ENCODE measurements at regions of chr2 and their contacts with region 1.

Region 1: GRCh38 chr2:112941753-112942658 is 31.0 kb downstream of the IL37 start:
- DNase-seq: peak; percentile 50
- H3K4me3 ChIP-seq: no peak overlapping the region
- H3K27ac ChIP-seq: no peak overlapping the region
- H3K27me3 ChIP-seq: peaks cover 10% of the 10 kb centered on the region
- CTCF ChIP-seq: peak; percentile 98

Region 2: GRCh38 chr2:112726497-112727190 is 215.4 kb before region 1 on chr2:
- CTCF ChIA-PET with region 1: interaction called, 57 read pairs
- POLR2A ChIA-PET with region 1: no interaction called
- DNase-seq: peak; percentile 81
- H3K4me3 ChIP-seq: no peak overlapping the region
- H3K27ac ChIP-seq: no peak overlapping the region
- H3K27me3 ChIP-seq: no peaks in the 10 kb centered on the region
- CTCF ChIP-seq: peak; percentile 97

Region 3: DNA sequence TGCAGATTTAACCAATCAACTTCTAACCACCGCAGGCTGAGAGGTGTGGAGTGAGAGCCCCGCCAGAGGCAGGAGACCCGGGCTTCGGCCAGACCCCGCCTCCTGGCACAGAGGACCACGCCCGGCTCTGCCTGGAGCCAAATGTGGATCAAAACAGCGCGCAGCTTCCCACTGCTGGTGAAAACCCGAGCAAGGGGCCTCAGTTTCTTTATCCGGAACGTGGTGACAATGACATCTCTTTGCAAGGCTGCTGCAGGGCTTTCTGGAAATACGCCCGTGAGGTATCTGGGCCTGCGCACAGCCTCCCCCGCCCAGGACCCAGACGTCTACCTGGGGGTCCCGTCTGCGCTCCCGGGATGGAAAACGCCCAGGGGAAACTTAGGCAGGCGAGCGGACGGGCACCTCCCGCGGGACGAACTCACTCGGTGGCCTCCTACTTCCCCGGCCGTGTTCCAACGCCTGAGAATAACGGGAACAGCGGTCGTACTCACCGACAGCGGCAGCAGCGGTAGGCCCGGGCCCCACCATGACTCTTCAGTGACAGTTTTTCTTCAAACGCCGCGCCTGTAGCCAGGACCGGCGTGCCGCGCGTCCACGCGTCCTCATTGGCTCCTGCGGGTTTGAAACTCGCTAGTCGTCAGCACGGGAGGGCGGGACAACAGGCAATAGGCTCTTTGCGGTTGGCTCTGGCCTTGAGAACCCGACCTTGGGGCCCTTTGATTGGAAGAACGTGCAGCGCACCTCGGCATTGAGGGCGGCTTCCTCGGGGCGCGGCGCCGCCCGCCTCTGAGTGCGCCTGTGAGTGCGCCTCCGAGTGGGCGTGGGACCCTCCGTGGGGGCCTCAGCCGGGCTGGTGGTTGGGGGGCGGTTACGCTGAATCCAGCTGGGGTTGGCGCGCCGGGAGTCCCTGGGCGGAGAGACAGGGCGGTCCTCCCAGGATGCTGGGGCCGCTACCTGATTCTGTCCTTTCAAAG is 177.6 kb before region 1 on chr2 and contains the start of gene CKAP2L:
- CTCF ChIA-PET with region 1: interaction called, 44 read pairs
- POLR2A ChIA-PET with region 1: no interaction called
- DNase-seq: peak; percentile 95
- H3K4me3 ChIP-seq: peak within 1 kb of the TSS; percentile 88
- H3K27ac ChIP-seq: peak within 1 kb of the TSS; percentile 54
- H3K27me3 ChIP-seq: no peaks in the 10 kb centered on the region
- CTCF ChIP-seq: no peak
- polyA plus RNA-seq, gene CKAP2L: 2.9 and 4.4 TPM in 2 replicates

Region 4: DNA sequence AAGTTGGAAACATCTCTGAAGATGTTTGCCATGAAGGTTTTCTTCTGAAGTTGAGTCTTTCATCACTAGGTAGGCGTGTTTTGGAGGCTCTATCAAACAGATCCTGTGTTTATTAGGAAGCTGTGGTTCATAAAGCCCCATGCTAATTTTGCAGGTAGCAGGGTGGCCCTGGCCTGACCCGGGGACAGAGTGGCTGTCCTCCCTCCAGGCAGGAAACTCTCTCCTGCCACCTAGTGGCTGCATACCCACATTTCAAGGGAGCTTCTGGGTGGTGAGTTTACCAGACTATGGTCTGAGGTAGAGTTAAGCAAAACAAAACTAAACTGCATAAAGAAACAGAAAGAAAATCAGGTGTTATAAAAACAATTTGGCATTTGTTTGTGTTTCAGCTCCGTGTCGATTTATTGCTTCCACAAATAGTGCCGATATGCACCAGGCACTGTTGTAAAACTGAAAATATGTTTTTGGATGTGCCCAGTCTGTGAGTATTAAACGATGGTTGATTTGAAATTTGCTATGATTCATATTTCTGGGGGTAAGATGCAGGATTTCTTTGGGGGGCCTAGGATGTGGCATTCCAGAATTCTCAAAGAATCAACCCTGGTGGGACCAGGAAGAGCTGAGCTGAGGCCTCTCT is 57.0 kb before region 1 on chr2:
- CTCF ChIA-PET with region 1: interaction called, 15 read pairs
- POLR2A ChIA-PET with region 1: no interaction called
- DNase-seq: no peak
- H3K4me3 ChIP-seq: no peak overlapping the region
- H3K27ac ChIP-seq: no peak overlapping the region
- H3K27me3 ChIP-seq: no peaks in the 10 kb centered on the region
- CTCF ChIP-seq: peak; percentile 64

Region 5: DNA sequence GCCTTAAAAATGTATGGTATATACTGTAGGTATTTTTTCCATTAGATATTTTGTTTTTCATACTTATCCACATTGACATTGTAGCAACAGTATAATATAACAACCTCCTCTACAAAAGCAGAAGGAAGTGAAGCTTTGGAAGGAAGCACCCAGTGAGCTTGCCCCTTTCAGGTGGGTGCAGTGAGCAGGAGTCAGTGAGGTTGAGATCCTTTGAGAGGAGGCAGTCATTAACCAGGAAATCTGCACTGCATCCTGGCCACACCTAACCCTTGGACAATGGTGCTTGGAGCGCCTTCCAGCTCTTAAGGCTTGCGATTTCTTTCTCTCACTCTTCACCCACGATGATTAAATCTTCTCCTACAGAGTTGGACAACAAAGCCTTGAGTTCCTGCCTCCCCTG is 17.2 kb before region 1 on chr2:
- CTCF ChIA-PET with region 1: interaction called, 37 read pairs
- POLR2A ChIA-PET with region 1: no interaction called
- DNase-seq: no peak
- H3K4me3 ChIP-seq: no peak overlapping the region
- H3K27ac ChIP-seq: no peak overlapping the region
- H3K27me3 ChIP-seq: peaks cover 17% of the 10 kb centered on the region
- CTCF ChIP-seq: no peak

Measured in AG04450 (cell line).